Lower leg skin (tissue), 4 donors: ENCODE measurements at regions of chr15 and their contacts with region 1.

Region 1: DNA sequence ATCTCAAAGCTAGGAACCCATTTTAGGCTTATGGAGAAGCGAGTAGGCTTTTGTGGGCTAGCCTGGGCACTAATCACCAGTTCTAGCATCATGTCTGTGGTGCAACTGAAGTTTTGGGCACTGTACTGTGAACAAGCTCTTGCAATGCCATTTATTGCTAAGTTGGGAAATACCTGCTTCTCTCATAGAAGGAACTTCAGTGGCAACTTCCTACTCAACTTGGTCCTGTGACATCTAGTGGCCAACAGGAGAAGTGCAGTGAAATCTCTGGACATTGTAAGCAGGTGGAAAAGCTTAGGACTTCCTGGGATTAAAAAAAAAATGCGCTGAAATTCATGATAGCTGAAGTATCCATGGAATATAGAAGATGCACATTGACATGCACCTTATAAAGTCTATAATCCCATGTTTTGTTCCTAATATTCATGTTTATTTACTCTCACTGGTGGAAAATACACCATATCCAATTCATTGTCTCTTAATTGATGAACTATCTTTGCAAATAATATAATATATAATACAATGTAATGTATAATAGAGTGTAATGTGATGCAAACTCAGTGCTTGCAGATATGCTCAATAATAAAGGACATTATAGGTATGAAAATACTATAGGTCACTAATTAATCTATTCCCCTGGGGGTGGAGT is 6.5 kb upstream of the ALDH1A3 start:
- DNase-seq: peak; percentile 83 to 91
- H3K4me3 ChIP-seq: no peak overlapping the region
- CTCF ChIP-seq: peak in 1 of 3 donors; percentile 73
- POLR2A ChIP-seq: no peak

Region 2: DNA sequence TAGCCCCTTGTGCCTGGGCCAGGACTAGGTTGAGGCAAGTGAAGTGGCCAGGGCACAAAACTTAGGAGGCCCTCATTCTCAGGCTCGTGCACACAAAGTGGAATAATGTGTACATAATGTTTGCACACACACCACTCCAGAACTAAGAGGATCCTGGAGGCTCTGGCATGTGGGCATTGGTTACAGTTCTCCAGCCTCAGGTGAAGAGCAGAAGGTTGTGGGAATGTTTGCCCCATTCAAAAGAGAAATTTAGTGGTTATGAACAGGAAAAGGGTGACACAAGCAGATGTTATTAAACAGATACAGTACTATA is 239.4 kb before region 1 on chr15:
- intact Hi-C with region 1: loop called (anchors 5 kb)
- DNase-seq: no peak
- H3K4me3 ChIP-seq: no peak overlapping the region
- CTCF ChIP-seq: no peak
- POLR2A ChIP-seq: no peak